Naive thymus-derived CD4-positive, alpha-beta T cell (primary cell): ENCODE measurements at regions of chr2 and their contacts with region 1.

Region 1: DNA sequence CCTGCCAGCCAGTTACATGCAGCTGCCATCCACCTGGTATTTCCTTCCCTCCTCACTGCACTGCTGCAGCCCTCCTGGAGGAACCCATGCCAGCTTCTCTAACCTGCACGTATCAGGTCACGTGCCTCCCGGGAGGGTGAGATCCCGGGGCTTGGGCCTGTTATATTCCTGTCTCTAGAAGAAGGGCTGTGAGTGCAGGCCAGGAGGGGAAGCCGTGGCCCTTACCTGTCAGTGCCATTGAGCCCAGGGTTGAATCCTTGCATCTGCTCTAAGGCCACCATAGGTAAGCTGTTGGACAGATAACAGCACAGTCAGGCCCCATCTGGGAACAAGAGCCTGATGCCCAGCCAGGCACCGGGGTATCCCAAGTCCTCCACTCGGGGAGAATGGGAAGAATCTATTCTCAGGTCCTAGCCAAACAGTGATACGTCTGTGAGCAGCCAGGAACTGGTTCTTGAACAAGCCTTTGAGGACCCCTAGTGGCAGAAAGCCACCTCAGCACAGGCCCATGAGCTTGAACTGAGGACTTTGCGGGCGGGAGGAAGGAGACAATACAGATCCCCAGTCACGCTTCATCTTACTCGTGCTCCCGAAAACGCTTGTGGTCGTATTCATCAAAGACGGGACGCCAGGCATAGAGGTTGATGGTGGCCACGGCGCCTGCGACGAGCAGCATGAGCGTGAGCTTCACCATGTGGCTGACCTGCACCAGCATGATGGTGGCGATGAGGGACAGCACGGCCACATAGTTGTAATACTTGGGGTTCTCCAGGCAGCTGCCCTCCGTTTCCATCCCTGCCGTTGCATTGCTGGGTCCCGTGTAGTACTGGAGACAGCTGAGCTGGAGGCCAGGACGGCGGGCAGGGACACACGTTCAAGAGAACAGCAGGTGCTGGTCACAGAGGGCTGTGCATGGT is 34.4 kb downstream of the CENPO start:
- DNase-seq: peak; percentile 41 to 76 (median 65)
- ATAC-seq: peak; percentile 91
- H3K4me3 ChIP-seq: no peak overlapping the region
- H3K4me3 Mint-ChIP-seq: no peak overlapping the region
- H3K27ac ChIP-seq: no peak overlapping the region
- H3K27ac Mint-ChIP-seq: peak overlapping the region in 3 of 9 donors; percentile 7 to 74 (median 42)
- H3K4me1 ChIP-seq: peaks cover 0 to 4% of the 10 kb centered on the region in 2 donors
- H3K4me1 Mint-ChIP-seq: peaks cover 4 to 23% (median 7%) of the 10 kb centered on the region in 7 donors
- H3K27me3 ChIP-seq: no peaks in the 10 kb centered on the region
- H3K27me3 Mint-ChIP-seq: no peaks in the 10 kb centered on the region

Region 2: DNA sequence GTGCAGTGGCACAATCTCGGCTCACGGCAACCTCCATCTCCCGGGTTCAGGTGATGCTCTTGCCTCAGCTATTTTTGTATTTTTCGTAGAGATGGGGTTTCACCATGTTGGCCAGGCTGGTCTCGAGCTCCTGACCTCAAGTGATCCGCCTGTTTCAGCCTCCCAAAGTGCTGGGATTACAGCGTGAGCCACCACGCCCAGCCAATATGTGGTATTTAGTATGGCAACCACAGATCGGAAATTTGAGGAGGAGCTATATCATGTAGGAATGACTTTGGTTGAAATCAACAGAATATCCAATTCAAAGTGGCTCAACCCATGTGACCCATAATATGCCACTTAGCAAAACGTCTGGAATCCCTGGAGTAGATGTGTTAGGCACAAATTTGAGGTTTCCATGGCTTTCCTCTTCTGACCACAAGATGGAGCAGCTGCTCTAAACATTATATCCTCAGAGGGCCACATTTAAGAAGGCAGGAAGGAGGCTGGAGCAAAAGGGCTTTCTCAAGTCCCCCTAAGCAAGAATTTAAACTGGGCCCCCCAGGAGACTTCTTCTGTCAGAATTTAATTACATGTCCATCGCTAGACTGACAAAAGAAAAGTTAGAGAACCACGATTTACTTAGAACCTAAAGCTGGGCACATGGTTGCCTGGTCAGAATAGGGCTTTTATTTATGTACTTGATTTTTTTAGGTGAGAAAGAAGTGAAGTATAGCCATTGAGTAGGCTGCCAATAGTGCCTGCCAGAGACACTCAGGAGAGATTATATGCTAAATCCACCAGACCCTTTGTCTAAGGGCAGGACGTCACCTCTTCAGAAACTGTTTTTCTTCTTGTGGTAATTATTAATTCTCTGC is 417.7 kb before region 1 on chr2:
- CTCF ChIA-PET with region 1: interaction called, 80 read pairs
- POLR2A ChIA-PET with region 1: interaction called, 7 read pairs
- intact Hi-C with region 1: loop called (anchors 1 kb)
- DNase-seq: peak in 7 of 9 donors; percentile 19 to 59 (median 51)
- ATAC-seq: peak; percentile 79
- H3K4me3 ChIP-seq: no peak overlapping the region
- H3K4me3 Mint-ChIP-seq: no peak overlapping the region
- H3K27ac ChIP-seq: no peak overlapping the region
- H3K27ac Mint-ChIP-seq: no peak overlapping the region
- H3K4me1 ChIP-seq: no peaks in the 10 kb centered on the region
- H3K4me1 Mint-ChIP-seq: no peaks in the 10 kb centered on the region
- H3K27me3 ChIP-seq: no peaks in the 10 kb centered on the region
- H3K27me3 Mint-ChIP-seq: peaks cover 2 to 19% (median 6%) of the 10 kb centered on the region in 5 donors

Region 3: GRCh38 chr2:24490674-24491625 is 336.6 kb before region 1 on chr2 and contains the start of gene NCOA1:
- CTCF ChIA-PET with region 1: no interaction called
- POLR2A ChIA-PET with region 1: no interaction called
- intact Hi-C with region 1: loop called in 1 of 2 experiments (anchors 2 kb)
- DNase-seq: peak; percentile 82 to 92 (median 90)
- ATAC-seq: peak; percentile 91
- H3K4me3 ChIP-seq: peak within 1 kb of the TSS; percentile 63
- H3K4me3 Mint-ChIP-seq: peak within 1 kb of the TSS; percentile 80 to 95 (median 90)
- H3K27ac ChIP-seq: peak within 1 kb of the TSS; percentile 93
- H3K27ac Mint-ChIP-seq: peak within 1 kb of the TSS; percentile 87 to 98 (median 93)
- H3K4me1 ChIP-seq: peaks cover 26 to 48% of the 10 kb centered on the region in 2 donors
- H3K4me1 Mint-ChIP-seq: peaks cover 46 to 62% (median 59%) of the 10 kb centered on the region in 7 donors
- H3K27me3 ChIP-seq: no peaks in the 10 kb centered on the region
- H3K27me3 Mint-ChIP-seq: peaks cover 0 to 11% (median 0%) of the 10 kb centered on the region in 5 donors
- total RNA-seq, gene NCOA1: 20.9 to 72.8 (median 46.6) TPM

Region 4: DNA sequence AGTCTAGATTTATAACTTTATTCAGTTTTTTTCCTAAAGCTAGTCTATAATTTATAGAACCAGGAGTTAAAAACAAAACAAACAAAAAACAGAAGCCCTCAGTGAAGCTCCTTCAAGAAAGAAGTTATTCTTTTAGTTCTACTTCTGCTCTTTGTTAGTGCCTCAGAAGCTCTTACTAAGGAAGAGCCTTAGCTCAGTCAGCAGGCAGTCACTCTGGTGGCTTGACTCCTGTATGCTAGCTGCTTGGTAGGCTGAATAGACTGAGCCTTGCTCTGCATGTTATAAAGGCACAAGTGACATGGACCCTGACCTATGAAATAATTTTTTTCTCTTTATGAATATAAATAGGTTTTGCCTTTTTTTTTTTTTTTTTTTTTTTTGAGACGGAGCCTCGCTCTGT is 311.7 kb before region 1 on chr2:
- CTCF ChIA-PET with region 1: no interaction called
- POLR2A ChIA-PET with region 1: no interaction called
- intact Hi-C with region 1: no loop called
- DNase-seq: no peak
- ATAC-seq: no peak
- H3K4me3 ChIP-seq: no peak overlapping the region
- H3K4me3 Mint-ChIP-seq: no peak overlapping the region
- H3K27ac ChIP-seq: no peak overlapping the region
- H3K27ac Mint-ChIP-seq: no peak overlapping the region
- H3K4me1 ChIP-seq: peaks cover 9 to 10% of the 10 kb centered on the region in 2 donors
- H3K4me1 Mint-ChIP-seq: peaks cover 28 to 84% (median 76%) of the 10 kb centered on the region in 7 donors
- H3K27me3 ChIP-seq: no peaks in the 10 kb centered on the region
- H3K27me3 Mint-ChIP-seq: no peaks in the 10 kb centered on the region

Region 5: DNA sequence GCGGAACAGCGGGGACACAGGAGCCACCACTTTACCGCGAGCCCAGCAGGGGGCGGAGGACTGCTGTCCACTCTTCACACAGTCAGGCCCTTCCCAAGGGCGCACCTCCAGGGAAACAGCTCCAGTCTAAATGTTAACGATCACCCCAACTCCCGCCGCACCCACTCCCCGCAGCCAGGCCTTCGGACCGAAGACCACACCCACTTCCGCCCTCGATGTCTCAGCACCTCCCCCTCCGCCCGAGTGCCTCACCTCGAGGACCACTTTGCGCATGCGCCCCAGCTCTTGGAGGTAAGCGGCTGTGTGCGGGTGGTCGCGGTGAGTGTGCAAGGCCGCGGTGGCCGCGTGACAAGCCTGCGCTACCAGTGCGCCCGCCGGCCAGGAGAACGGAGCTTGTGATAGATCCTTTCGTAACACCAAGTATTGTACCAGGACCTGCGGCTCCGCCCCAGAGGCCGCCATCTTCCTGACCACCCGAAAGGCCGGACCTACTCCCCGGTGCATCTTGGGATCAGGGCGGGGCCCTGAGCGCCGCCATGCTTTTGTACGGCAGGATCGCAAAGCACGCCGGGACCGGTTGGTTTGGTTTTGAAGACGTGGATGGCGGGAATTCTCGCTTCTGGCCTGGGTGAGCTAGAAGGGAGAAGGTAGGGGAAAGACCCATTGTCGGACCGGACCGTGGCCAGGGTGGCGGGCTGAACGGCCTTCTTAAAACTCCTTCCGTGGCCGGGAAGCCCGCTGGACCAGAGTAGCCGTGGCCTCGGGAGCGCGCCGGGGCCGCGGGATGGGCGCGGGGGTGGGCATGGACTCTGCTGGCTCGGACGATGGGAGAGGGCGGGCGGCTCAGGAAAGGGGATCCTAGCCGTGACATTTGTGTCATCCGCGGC is 34.5 kb before region 1 on chr2 and contains the starts of genes CENPO and PTRHD1:
- CTCF ChIA-PET with region 1: interaction called, 4 read pairs
- POLR2A ChIA-PET with region 1: no interaction called
- intact Hi-C with region 1: loop called in 1 of 2 experiments (anchors 1 kb)
- DNase-seq: peak; percentile 93 to 99 (median 97)
- ATAC-seq: peak; percentile 98
- H3K4me3 ChIP-seq: peak within 1 kb of the TSS; percentile 97
- H3K4me3 Mint-ChIP-seq: peak within 1 kb of the TSS; percentile 95 to 100 (median 98)
- H3K27ac ChIP-seq: peak within 1 kb of the TSS; percentile 96
- H3K27ac Mint-ChIP-seq: peak within 1 kb of the TSS; percentile 99 to 100 (median 99)
- H3K4me1 ChIP-seq: peaks cover 6 to 10% of the 10 kb centered on the region in 2 donors
- H3K4me1 Mint-ChIP-seq: peaks cover 5 to 53% (median 20%) of the 10 kb centered on the region in 7 donors
- H3K27me3 ChIP-seq: no peaks in the 10 kb centered on the region
- H3K27me3 Mint-ChIP-seq: no peaks in the 10 kb centered on the region
- total RNA-seq, gene CENPO: 3.6 to 36.6 (median 6.0) TPM
- total RNA-seq, gene PTRHD1: 14.3 to 31.5 (median 17.1) TPM

Region 6: GRCh38 chr2:25201265-25201664 is 373.7 kb after region 1 on chr2:
- CTCF ChIA-PET with region 1: no interaction called
- POLR2A ChIA-PET with region 1: no interaction called
- intact Hi-C with region 1: loop called in 1 of 2 experiments (anchors 5 kb)
- DNase-seq: no peak
- ATAC-seq: no peak
- H3K4me3 ChIP-seq: no peak overlapping the region
- H3K4me3 Mint-ChIP-seq: no peak overlapping the region
- H3K27ac ChIP-seq: no peak overlapping the region
- H3K27ac Mint-ChIP-seq: peak overlapping the region in 1 of 9 donors; percentile 33
- H3K4me1 ChIP-seq: peaks cover 0 to 7% of the 10 kb centered on the region in 2 donors
- H3K4me1 Mint-ChIP-seq: peaks cover under 1 to 17% (median 14%) of the 10 kb centered on the region in 7 donors
- H3K27me3 ChIP-seq: no peaks in the 10 kb centered on the region
- H3K27me3 Mint-ChIP-seq: peaks cover 0 to 18% (median 0%) of the 10 kb centered on the region in 5 donors